ENCODE measurements at regions of chr11 and their contacts with region 1.

Region 1: GRCh38 chr11:72024069-72024754 is 25.5 kb downstream of the IL18BP start:
- DNase-seq: no peak
- H3K4me3 Mint-ChIP-seq: no peak overlapping the region
- H3K27ac Mint-ChIP-seq: peak overlapping the region; percentile 2
- H3K4me1 Mint-ChIP-seq: peaks cover 24% of the 10 kb centered on the region
- H3K27me3 Mint-ChIP-seq: no peaks in the 10 kb centered on the region

Region 2: GRCh38 chr11:71908218-71908617 is 116.0 kb before region 1 on chr11:
- CTCF ChIA-PET with region 1: no interaction called
- POLR2A ChIA-PET with region 1: no interaction called
- intact Hi-C with region 1: no loop called
- DNase-seq: no peak
- H3K4me3 Mint-ChIP-seq: no peak overlapping the region
- H3K27ac Mint-ChIP-seq: no peak overlapping the region
- H3K4me1 Mint-ChIP-seq: peaks cover 12% of the 10 kb centered on the region
- H3K27me3 Mint-ChIP-seq: no peaks in the 10 kb centered on the region

Region 3: DNA sequence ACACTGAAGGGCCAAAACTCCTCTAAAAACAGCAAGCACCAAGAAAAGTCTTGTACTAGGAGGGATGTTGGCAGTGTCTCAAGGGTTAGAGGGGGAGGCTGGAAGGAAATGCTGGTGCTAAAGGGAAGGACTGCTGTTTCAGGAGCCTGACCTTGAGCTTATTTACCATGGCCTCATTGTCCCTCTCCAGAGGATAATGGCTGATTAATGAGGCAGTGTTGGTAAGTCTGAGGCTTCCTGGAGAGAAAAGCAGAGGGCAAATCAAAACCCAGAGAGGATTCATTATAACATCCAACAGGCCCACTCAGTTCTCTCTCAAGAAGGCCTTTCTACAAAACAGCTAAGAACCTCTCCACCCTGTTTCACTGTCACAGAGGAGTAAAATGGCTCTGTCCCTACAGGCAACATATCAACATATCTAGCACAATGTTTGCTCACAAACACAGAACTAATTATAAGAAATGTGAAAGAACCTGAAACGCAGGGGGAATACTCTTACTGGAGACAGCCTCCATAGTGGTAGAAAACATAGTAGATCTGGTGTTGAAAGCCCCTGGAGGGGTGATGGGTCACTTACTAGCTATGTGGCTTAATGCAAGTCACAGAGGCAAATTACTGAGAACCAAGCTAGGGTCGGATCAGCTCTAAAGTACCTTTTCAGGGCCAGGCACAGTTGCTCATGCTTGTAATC is 24.7 kb after region 1 on chr11:
- CTCF ChIA-PET with region 1: interaction called, 11 read pairs
- POLR2A ChIA-PET with region 1: no interaction called
- intact Hi-C with region 1: no loop called
- DNase-seq: no peak
- H3K4me3 Mint-ChIP-seq: no peak overlapping the region
- H3K27ac Mint-ChIP-seq: no peak overlapping the region
- H3K4me1 Mint-ChIP-seq: peaks cover 5% of the 10 kb centered on the region
- H3K27me3 Mint-ChIP-seq: no peaks in the 10 kb centered on the region

Region 4: GRCh38 chr11:72072348-72072747 is 48.1 kb after region 1 on chr11:
- CTCF ChIA-PET with region 1: interaction called, 26 read pairs
- POLR2A ChIA-PET with region 1: no interaction called
- intact Hi-C with region 1: no loop called
- DNase-seq: no peak
- H3K4me3 Mint-ChIP-seq: no peak overlapping the region
- H3K27ac Mint-ChIP-seq: peak overlapping the region; percentile 25
- H3K4me1 Mint-ChIP-seq: peaks cover 46% of the 10 kb centered on the region
- H3K27me3 Mint-ChIP-seq: no peaks in the 10 kb centered on the region

Region 5: DNA sequence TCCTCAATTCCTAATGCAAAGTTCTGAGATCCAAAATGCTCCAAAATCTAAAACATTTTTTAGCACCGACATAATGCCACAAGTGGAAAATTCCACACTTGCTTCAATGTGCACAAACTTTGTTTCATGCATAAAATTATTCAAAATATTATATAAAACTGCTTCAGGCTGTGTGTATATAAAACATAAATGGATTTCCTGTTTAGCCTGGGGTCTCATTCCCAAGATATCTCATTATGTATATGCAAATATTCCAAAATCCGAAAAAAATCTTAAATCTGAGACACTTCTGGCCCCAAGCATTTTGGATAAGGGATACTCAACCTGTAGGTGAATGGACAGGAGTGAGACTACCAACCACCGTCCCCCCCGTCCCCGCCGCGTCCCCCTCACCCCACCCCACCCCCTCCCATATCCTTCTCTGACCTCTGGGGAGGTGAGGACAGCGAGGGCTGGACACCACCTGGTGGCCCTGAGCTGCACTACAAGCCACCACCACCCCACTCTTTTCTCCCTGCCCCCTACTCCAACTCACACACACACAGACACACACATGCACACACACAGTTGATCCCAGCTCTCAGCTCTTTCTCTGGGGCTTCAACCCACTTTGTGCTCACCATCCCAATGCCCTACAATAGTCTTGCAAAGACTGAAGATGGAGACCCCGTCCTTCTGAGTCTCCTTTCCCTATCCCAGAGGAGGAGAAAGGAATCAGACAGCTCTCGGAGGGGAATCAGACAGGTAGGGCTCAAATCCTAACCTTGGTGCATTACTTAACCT is 549.1 kb after region 1 on chr11:
- CTCF ChIA-PET with region 1: no interaction called
- POLR2A ChIA-PET with region 1: no interaction called
- intact Hi-C with region 1: no loop called
- DNase-seq: peak; percentile 51
- H3K4me3 Mint-ChIP-seq: no peak overlapping the region
- H3K27ac Mint-ChIP-seq: no peak overlapping the region
- H3K4me1 Mint-ChIP-seq: peaks cover 9% of the 10 kb centered on the region
- H3K27me3 Mint-ChIP-seq: peaks cover 9% of the 10 kb centered on the region

Measured in activated CD4-positive, alpha-beta memory T cell treated with anti-CD3 and anti-CD28 coated beads for 36 hours (primary cell).